Uterus (tissue), 4 donors: ENCODE measurements at regions of chr17 and their contacts with region 1.

Region 1: GRCh38 chr17:42677008-42677857 is 439 bp upstream of the PLEKHH3 start:
- DNase-seq: peak; percentile 100
- H3K4me3 ChIP-seq: peak overlapping the region; percentile 88 to 91
- H3K27ac ChIP-seq: peak overlapping the region; percentile 96 to 97
- H3K4me1 ChIP-seq: peaks cover 3 to 22% of the 10 kb centered on the region in 2 donors
- H3K27me3 ChIP-seq: no peaks in the 10 kb centered on the region
- CTCF ChIP-seq: no peak
- POLR2A ChIP-seq: no peak

Region 2: GRCh38 chr17:42577532-42578281 is 99.5 kb before region 1 on chr17 and contains the start of gene PSMC3IP:
- intact Hi-C with region 1: loop called (anchors 10 kb)
- DNase-seq: peak; percentile 95
- H3K4me3 ChIP-seq: peak within 1 kb of the TSS; percentile 43 to 65
- H3K27ac ChIP-seq: peak within 1 kb of the TSS; percentile 73 to 82
- H3K4me1 ChIP-seq: peaks cover 0 to 12% of the 10 kb centered on the region in 2 donors
- H3K27me3 ChIP-seq: no peaks in the 10 kb centered on the region
- CTCF ChIP-seq: peak in 2 of 4 experiments; percentile 40 to 58
- POLR2A ChIP-seq: peak; percentile 64 to 66
- total RNA-seq, gene PSMC3IP: 2.8 to 16.5 (median 5.0) TPM